ENCODE measurements at regions of chr12 and their contacts with region 1.

Region 1: DNA sequence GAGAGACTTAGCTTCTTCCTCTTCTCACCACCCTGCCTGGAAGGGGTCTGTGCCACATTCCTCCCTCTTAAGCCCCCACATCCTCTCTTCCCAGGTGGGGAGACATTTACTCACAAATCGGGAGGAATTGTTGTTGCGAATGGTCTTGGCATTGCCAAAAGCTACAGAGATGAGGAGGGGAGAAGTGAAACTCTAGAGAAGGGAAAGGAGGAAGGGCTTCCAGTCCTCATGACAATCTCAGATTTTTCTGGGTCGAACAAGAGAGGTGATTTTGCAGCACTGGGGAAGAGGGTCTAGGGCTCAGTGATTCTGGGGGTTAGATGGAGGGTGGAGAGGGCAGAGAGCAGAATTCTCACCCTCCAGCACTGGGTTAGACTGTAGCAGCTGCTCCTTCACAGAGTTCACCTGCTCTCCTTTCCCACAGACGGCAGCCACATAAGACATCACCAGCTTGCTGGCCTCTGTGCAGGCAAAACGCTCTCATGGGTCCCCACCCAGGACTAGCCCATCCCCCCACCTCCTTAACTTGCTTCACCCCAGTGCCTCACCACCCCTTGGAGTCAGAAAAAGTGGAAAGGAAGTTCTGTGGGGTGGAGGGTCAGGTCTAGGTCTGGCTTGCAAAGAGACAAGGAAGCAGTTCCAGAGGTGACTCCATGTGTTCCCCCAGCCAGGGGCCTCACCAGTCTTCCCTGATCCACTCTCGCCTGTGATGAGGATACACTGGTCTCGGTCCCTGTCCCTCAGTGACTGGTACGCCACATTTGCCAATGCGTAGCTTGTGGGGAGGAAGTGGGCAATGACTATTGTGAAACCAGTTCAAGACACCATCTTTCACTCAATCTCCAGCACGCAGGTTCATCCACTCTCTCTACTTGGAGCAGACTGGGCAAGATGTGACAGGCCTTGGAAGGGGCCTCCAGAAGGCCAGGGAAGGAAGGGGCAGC is 2.7 kb downstream of the MYO1A start:
- DNase-seq: peak; percentile 76
- ATAC-seq: peak; percentile 81
- H3K4me3 Mint-ChIP-seq: peak overlapping the region; percentile 73
- H3K27ac Mint-ChIP-seq: peak overlapping the region; percentile 88
- H3K4me1 Mint-ChIP-seq: peaks cover 43% of the 10 kb centered on the region
- H3K27me3 Mint-ChIP-seq: peaks cover 2% of the 10 kb centered on the region

Region 2: GRCh38 chr12:57031138-57031725 is 16.0 kb before region 1 on chr12:
- POLR2A ChIA-PET with region 1: interaction called, 16 read pairs
- DNase-seq: no peak
- ATAC-seq: peak; percentile 66
- H3K4me3 Mint-ChIP-seq: peak overlapping the region; percentile 34
- H3K27ac Mint-ChIP-seq: peak overlapping the region; percentile 53
- H3K4me1 Mint-ChIP-seq: peaks cover 30% of the 10 kb centered on the region
- H3K27me3 Mint-ChIP-seq: no peaks in the 10 kb centered on the region

Region 3: GRCh38 chr12:57063991-57064685 is 16.9 kb after region 1 on chr12:
- POLR2A ChIA-PET with region 1: interaction called, 13 read pairs
- DNase-seq: no peak
- ATAC-seq: peak; percentile 89
- H3K4me3 Mint-ChIP-seq: peak overlapping the region; percentile 70
- H3K27ac Mint-ChIP-seq: peak overlapping the region; percentile 91
- H3K4me1 Mint-ChIP-seq: peaks cover 27% of the 10 kb centered on the region
- H3K27me3 Mint-ChIP-seq: no peaks in the 10 kb centered on the region

Region 4: GRCh38 chr12:57078519-57079404 is 31.5 kb after region 1 on chr12 and contains the start of gene NEMP1:
- POLR2A ChIA-PET with region 1: interaction called, 11 read pairs
- DNase-seq: peak; percentile 83
- ATAC-seq: peak; percentile 93
- H3K4me3 Mint-ChIP-seq: peak within 1 kb of the TSS; percentile 98
- H3K27ac Mint-ChIP-seq: peak within 1 kb of the TSS; percentile 99
- H3K4me1 Mint-ChIP-seq: peaks cover 17% of the 10 kb centered on the region
- H3K27me3 Mint-ChIP-seq: no peaks in the 10 kb centered on the region
- total RNA-seq, gene NEMP1: 52.9 to 59.6 TPM

Measured in activated naive CD8-positive, alpha-beta T cell treated with anti-CD3 and anti-CD28 coated beads, Interleukin-2, amount 10 ng/mL, durations not matched to agents 7 days and 5 days (primary cell).